ENCODE measurements at regions of chr6 and their contacts with region 1.

Region 1: GRCh38 chr6:31597006-31597405 is 4.2 kb upstream of the NCR3 start:
- DNase-seq: peak; percentile 86
- ATAC-seq: peak; percentile 68
- H3K4me3 ChIP-seq: no peak overlapping the region
- H3K4me3 Mint-ChIP-seq: peak overlapping the region; percentile 35
- H3K27ac ChIP-seq: peak overlapping the region in 1 of 2 donors; percentile 27
- H3K27ac Mint-ChIP-seq: peak overlapping the region; percentile 75
- H3K4me1 ChIP-seq: peaks cover 49 to 61% of the 10 kb centered on the region in 2 donors
- H3K4me1 Mint-ChIP-seq: peaks cover 52% of the 10 kb centered on the region
- H3K27me3 ChIP-seq: no peaks in the 10 kb centered on the region
- H3K27me3 Mint-ChIP-seq: no peaks in the 10 kb centered on the region
- CTCF ChIP-seq: peak; percentile 80

Region 2: GRCh38 chr6:31493875-31494694 is 102.9 kb before region 1 on chr6:
- CTCF ChIA-PET with region 1: interaction called, 57 read pairs
- POLR2A ChIA-PET with region 1: interaction called, 4 read pairs
- intact Hi-C with region 1: loop called (anchors 1 kb)
- DNase-seq: peak; percentile 89
- ATAC-seq: peak; percentile 47
- H3K4me3 ChIP-seq: peak overlapping the region; percentile 76 to 91 (median 85)
- H3K4me3 Mint-ChIP-seq: peak overlapping the region; percentile 83
- H3K27ac ChIP-seq: peak overlapping the region; percentile 74 to 80
- H3K27ac Mint-ChIP-seq: peak overlapping the region; percentile 89
- H3K4me1 ChIP-seq: peaks cover 42 to 54% of the 10 kb centered on the region in 2 donors
- H3K4me1 Mint-ChIP-seq: peaks cover 46% of the 10 kb centered on the region
- H3K27me3 ChIP-seq: no peaks in the 10 kb centered on the region
- H3K27me3 Mint-ChIP-seq: no peaks in the 10 kb centered on the region
- CTCF ChIP-seq: peak; percentile 88

Region 3: GRCh38 chr6:31541658-31542521 is 55.1 kb before region 1 on chr6 and contains the start of gene DDX39B:
- CTCF ChIA-PET with region 1: interaction called, 2,241 read pairs
- POLR2A ChIA-PET with region 1: interaction called, 1,450 read pairs
- intact Hi-C with region 1: loop called (anchors 1 kb)
- DNase-seq: peak; percentile 97
- ATAC-seq: peak; percentile 72
- H3K4me3 ChIP-seq: peak within 1 kb of the TSS; percentile 79 to 100 (median 97)
- H3K4me3 Mint-ChIP-seq: peak within 1 kb of the TSS; percentile 99
- H3K27ac ChIP-seq: peak within 1 kb of the TSS; percentile 97 to 99
- H3K27ac Mint-ChIP-seq: peak within 1 kb of the TSS; percentile 93
- H3K4me1 ChIP-seq: peaks cover 37 to 43% of the 10 kb centered on the region in 2 donors
- H3K4me1 Mint-ChIP-seq: peaks cover 50% of the 10 kb centered on the region
- H3K27me3 ChIP-seq: no peaks in the 10 kb centered on the region
- H3K27me3 Mint-ChIP-seq: no peaks in the 10 kb centered on the region
- CTCF ChIP-seq: no peak
- total RNA-seq, gene DDX39B: 576 and 577 TPM in 2 replicates

Region 4: DNA sequence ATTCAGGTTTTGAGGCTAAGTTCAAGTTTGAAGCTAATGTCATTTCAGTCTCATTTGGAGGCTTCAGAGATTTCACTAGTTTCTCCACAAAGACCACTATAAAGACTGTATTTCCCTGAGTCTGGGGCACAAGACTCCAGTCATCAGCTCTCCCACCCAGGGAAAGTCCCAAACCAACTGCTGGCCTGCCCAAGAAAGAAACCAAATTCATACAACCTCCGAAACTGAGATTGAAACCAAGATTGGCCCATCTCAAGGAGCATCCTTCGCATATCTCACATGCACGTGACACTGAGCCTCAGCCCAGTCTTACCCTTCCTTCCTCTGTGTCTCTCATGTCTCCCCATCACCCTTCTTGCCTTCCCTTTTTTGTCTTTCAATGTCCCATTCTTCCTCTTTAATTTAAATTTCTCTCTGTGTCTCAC is 28.5 kb before region 1 on chr6:
- CTCF ChIA-PET with region 1: interaction called, 2,241 read pairs
- POLR2A ChIA-PET with region 1: interaction called, 1,450 read pairs
- intact Hi-C with region 1: loop called (anchors 1 kb)
- DNase-seq: peak; percentile 94
- ATAC-seq: peak; percentile 70
- H3K4me3 ChIP-seq: peak overlapping the region in 1 of 5 experiments; percentile 19
- H3K4me3 Mint-ChIP-seq: peak overlapping the region; percentile 63
- H3K27ac ChIP-seq: peak overlapping the region; percentile 78 to 94
- H3K27ac Mint-ChIP-seq: peak overlapping the region; percentile 89
- H3K4me1 ChIP-seq: peaks cover 62 to 68% of the 10 kb centered on the region in 2 donors
- H3K4me1 Mint-ChIP-seq: peaks cover 75% of the 10 kb centered on the region
- H3K27me3 ChIP-seq: no peaks in the 10 kb centered on the region
- H3K27me3 Mint-ChIP-seq: no peaks in the 10 kb centered on the region
- CTCF ChIP-seq: no peak

Region 5: DNA sequence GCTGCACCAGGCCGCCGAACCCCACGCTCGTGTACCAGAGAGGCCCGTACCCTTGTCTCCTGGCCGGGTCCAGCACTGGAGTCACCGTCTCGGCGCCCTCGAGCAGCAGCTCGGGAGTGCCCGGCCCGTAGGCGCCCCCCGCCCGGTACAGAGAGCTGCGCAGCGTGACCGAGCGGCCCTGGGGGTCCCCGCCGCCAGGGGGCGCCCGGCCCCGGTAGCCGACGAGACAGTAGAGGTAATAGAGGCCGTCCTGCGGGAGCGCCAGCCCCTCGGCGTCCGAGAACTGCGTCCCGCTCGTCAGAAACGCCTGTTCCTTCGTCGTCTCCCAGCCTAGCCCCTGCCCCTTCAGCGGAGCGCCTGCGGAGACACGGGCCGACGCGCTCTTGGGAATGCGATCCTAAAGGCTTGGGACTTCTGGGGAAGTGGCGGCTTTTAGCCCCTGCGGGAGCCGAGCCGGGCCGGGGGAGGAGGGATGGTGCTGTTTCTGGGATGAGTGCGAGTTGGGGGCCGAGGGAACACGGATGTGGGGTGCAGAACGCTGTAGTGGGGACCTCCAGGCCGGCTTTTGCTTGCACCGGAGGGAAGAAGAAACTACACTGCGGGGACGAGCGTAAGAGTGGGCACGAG is 16.1 kb before region 1 on chr6:
- CTCF ChIA-PET with region 1: interaction called, 1,108 read pairs
- POLR2A ChIA-PET with region 1: interaction called, 1,450 read pairs
- intact Hi-C with region 1: loop called (anchors 1 kb)
- DNase-seq: peak; percentile 89
- ATAC-seq: peak; percentile 62
- H3K4me3 ChIP-seq: peak overlapping the region; percentile 83 to 100 (median 96)
- H3K4me3 Mint-ChIP-seq: peak overlapping the region; percentile 98
- H3K27ac ChIP-seq: peak overlapping the region; percentile 95 to 97
- H3K27ac Mint-ChIP-seq: peak overlapping the region; percentile 99
- H3K4me1 ChIP-seq: peaks cover 71 to 83% of the 10 kb centered on the region in 2 donors
- H3K4me1 Mint-ChIP-seq: peaks cover 82% of the 10 kb centered on the region
- H3K27me3 ChIP-seq: no peaks in the 10 kb centered on the region
- H3K27me3 Mint-ChIP-seq: no peaks in the 10 kb centered on the region
- CTCF ChIP-seq: peak; percentile 99

Region 6: GRCh38 chr6:31609519-31610406 is 12.8 kb after region 1 on chr6:
- CTCF ChIA-PET with region 1: interaction called, 44 read pairs
- POLR2A ChIA-PET with region 1: interaction called, 3 read pairs
- intact Hi-C with region 1: no loop called
- DNase-seq: no peak
- ATAC-seq: no peak
- H3K4me3 ChIP-seq: no peak overlapping the region
- H3K4me3 Mint-ChIP-seq: no peak overlapping the region
- H3K27ac ChIP-seq: no peak overlapping the region
- H3K27ac Mint-ChIP-seq: no peak overlapping the region
- H3K4me1 ChIP-seq: peaks cover 8 to 9% of the 10 kb centered on the region in 2 donors
- H3K4me1 Mint-ChIP-seq: peaks cover 10% of the 10 kb centered on the region
- H3K27me3 ChIP-seq: no peaks in the 10 kb centered on the region
- H3K27me3 Mint-ChIP-seq: no peaks in the 10 kb centered on the region
- CTCF ChIP-seq: no peak